ENCODE measurements at regions of chr17 and their contacts with region 1.

Region 1: GRCh38 chr17:36124879-36125824 is 21.5 kb downstream of the CCL4 start:
- DNase-seq: peak in 1 of 6 donors; percentile 68
- ATAC-seq: no peak
- H3K4me3 ChIP-seq: no peak overlapping the region
- H3K27ac ChIP-seq: no peak overlapping the region
- H3K4me1 ChIP-seq: no peaks in the 10 kb centered on the region
- H3K27me3 ChIP-seq: no peaks in the 10 kb centered on the region
- CTCF ChIP-seq: no peak

Region 2: DNA sequence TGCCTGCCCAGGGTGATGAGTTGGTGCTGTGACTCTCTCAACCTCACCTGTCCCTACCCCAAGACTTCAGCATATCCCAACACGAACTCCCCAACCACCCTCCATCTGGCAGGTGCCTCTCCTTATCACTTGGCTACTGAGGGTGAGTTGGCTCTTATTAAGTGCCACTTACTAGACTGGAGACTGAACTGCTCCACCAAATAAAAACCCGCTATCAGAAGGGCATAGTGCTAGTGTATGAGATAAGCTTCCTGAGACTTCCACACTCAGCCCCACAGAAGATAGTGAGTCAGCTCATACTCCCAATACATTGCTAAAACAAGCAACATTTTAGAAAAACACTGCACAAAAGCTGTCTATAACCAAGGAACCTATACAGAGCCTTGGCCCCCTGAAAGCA is 77.1 kb before region 1 on chr17:
- intact Hi-C with region 1: no loop called
- DNase-seq: no peak
- ATAC-seq: no peak
- H3K4me3 ChIP-seq: no peak overlapping the region
- H3K27ac ChIP-seq: no peak overlapping the region
- H3K4me1 ChIP-seq: no peaks in the 10 kb centered on the region
- H3K27me3 ChIP-seq: no peaks in the 10 kb centered on the region
- CTCF ChIP-seq: no peak

Region 3: GRCh38 chr17:36183001-36183971 is 58.1 kb after region 1 on chr17:
- intact Hi-C with region 1: loop called in 1 of 3 experiments (anchors 5 kb)
- DNase-seq: peak; percentile 49 to 95 (median 71)
- ATAC-seq: peak; percentile 91 to 98 (median 96)
- H3K4me3 ChIP-seq: peak overlapping the region; percentile 38 to 88 (median 56)
- H3K27ac ChIP-seq: no peak overlapping the region
- H3K4me1 ChIP-seq: no peaks in the 10 kb centered on the region
- H3K27me3 ChIP-seq: no peaks in the 10 kb centered on the region
- CTCF ChIP-seq: no peak

Measured in pancreas (tissue), 10 donors.